CD8-positive, alpha-beta T cell (primary cell): ENCODE measurements at regions of chr20 and their contacts with region 1.

Region 1: DNA sequence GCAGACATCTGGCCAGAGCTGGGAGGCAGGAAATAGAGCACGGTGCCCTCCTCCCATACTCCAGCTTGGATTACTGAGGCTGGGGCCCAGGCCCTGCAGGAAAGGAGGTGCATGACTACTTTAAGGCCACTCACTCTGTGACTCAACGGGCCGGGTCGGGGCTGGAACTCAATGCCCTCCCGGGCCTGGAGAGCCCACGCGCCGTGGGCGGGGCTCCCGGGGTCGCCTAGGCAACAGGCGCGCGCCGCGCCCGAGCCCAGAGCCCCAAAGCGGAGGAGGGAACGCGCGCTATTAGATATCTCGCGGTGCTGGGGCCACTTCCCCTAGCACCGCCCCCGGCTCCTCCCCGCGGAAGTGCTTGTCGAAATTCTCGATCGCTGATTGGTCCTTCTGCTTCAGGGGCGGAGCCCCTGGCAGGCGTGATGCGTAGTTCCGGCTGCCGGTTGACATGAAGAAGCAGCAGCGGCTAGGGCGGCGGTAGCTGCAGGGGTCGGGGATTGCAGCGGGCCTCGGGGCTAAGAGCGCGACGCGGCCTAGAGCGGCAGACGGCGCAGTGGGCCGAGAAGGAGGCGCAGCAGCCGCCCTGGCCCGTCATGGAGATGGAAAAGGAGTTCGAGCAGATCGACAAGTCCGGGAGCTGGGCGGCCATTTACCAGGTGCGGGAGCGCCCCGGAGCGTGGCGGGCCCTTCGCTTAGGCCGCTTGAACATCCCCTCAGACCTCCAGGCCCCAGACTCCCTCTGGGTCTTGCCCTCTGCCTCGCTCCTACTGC is at the start of gene PTPN1:
- DNase-seq: peak; percentile 97 to 99 (median 99)
- ATAC-seq: peak; percentile 95
- H3K4me3 ChIP-seq: peak within 1 kb of the TSS; percentile 80 to 100
- H3K4me3 Mint-ChIP-seq: peak within 1 kb of the TSS; percentile 95
- H3K27ac ChIP-seq: peak within 1 kb of the TSS; percentile 91 to 94
- H3K27ac Mint-ChIP-seq: peak within 1 kb of the TSS; percentile 99
- H3K4me1 ChIP-seq: peaks cover 45% of the 10 kb centered on the region
- H3K4me1 Mint-ChIP-seq: peaks cover 52% of the 10 kb centered on the region
- H3K27me3 ChIP-seq: no peaks in the 10 kb centered on the region
- H3K27me3 Mint-ChIP-seq: no peaks in the 10 kb centered on the region
- CTCF ChIP-seq: no peak
- total RNA-seq, gene PTPN1: 96.0 to 97.5 TPM

Region 2: GRCh38 chr20:49812463-49813304 is 697.4 kb before region 1 on chr20 and contains the start of gene SLC9A8:
- CTCF ChIA-PET with region 1: no interaction called
- POLR2A ChIA-PET with region 1: no interaction called
- intact Hi-C with region 1: loop called in 1 of 2 experiments (anchors 10 kb)
- DNase-seq: peak; percentile 63 to 96 (median 82)
- ATAC-seq: peak; percentile 88
- H3K4me3 ChIP-seq: peak within 1 kb of the TSS; percentile 79 to 90
- H3K4me3 Mint-ChIP-seq: peak within 1 kb of the TSS; percentile 95
- H3K27ac ChIP-seq: peak within 1 kb of the TSS; percentile 84 to 95
- H3K27ac Mint-ChIP-seq: peak within 1 kb of the TSS; percentile 99
- H3K4me1 ChIP-seq: peaks cover 20% of the 10 kb centered on the region
- H3K4me1 Mint-ChIP-seq: peaks cover 35% of the 10 kb centered on the region
- H3K27me3 ChIP-seq: no peaks in the 10 kb centered on the region
- H3K27me3 Mint-ChIP-seq: no peaks in the 10 kb centered on the region
- CTCF ChIP-seq: peak; percentile 14
- total RNA-seq, gene SLC9A8: 30.7 to 32.9 TPM

Region 3: GRCh38 chr20:49853640-49854039 is 656.5 kb before region 1 on chr20:
- CTCF ChIA-PET with region 1: no interaction called
- POLR2A ChIA-PET with region 1: no interaction called
- intact Hi-C with region 1: no loop called
- DNase-seq: no peak
- ATAC-seq: no peak
- H3K4me3 ChIP-seq: no peak overlapping the region
- H3K4me3 Mint-ChIP-seq: no peak overlapping the region
- H3K27ac ChIP-seq: no peak overlapping the region
- H3K27ac Mint-ChIP-seq: no peak overlapping the region
- H3K4me1 ChIP-seq: no peaks in the 10 kb centered on the region
- H3K4me1 Mint-ChIP-seq: peaks cover 5% of the 10 kb centered on the region
- H3K27me3 ChIP-seq: no peaks in the 10 kb centered on the region
- H3K27me3 Mint-ChIP-seq: no peaks in the 10 kb centered on the region
- CTCF ChIP-seq: no peak

Region 4: GRCh38 chr20:50153485-50154377 is 356.4 kb before region 1 on chr20 and contains the start of gene PEDS1:
- CTCF ChIA-PET with region 1: interaction called, 3 read pairs
- POLR2A ChIA-PET with region 1: no interaction called
- intact Hi-C with region 1: loop called in 1 of 2 experiments (anchors 1 kb)
- DNase-seq: peak; percentile 55 to 92 (median 80)
- ATAC-seq: peak; percentile 93
- H3K4me3 ChIP-seq: peak within 1 kb of the TSS; percentile 89 to 92
- H3K4me3 Mint-ChIP-seq: peak within 1 kb of the TSS; percentile 90
- H3K27ac ChIP-seq: peak within 1 kb of the TSS; percentile 77 to 78
- H3K27ac Mint-ChIP-seq: peak within 1 kb of the TSS; percentile 91
- H3K4me1 ChIP-seq: peaks cover 36% of the 10 kb centered on the region
- H3K4me1 Mint-ChIP-seq: peaks cover 43% of the 10 kb centered on the region
- H3K27me3 ChIP-seq: no peaks in the 10 kb centered on the region
- H3K27me3 Mint-ChIP-seq: no peaks in the 10 kb centered on the region
- CTCF ChIP-seq: no peak
- total RNA-seq, gene PEDS1: 19.0 to 20.8 TPM

Region 5: GRCh38 chr20:50484276-50484976 is 25.7 kb before region 1 on chr20:
- CTCF ChIA-PET with region 1: interaction called, 3 read pairs
- POLR2A ChIA-PET with region 1: interaction called, 10 read pairs
- intact Hi-C with region 1: no loop called
- DNase-seq: no peak
- ATAC-seq: no peak
- H3K4me3 ChIP-seq: peak overlapping the region; percentile 36 to 64
- H3K4me3 Mint-ChIP-seq: peak overlapping the region; percentile 92
- H3K27ac ChIP-seq: peak overlapping the region; percentile 63 to 93
- H3K27ac Mint-ChIP-seq: peak overlapping the region; percentile 95
- H3K4me1 ChIP-seq: peaks cover 14% of the 10 kb centered on the region
- H3K4me1 Mint-ChIP-seq: peaks cover 23% of the 10 kb centered on the region
- H3K27me3 ChIP-seq: no peaks in the 10 kb centered on the region
- H3K27me3 Mint-ChIP-seq: no peaks in the 10 kb centered on the region
- CTCF ChIP-seq: no peak

Region 6: GRCh38 chr20:50575847-50576720 is 66.0 kb after region 1 on chr20:
- CTCF ChIA-PET with region 1: interaction called, 42 read pairs
- POLR2A ChIA-PET with region 1: interaction called, 4 read pairs
- intact Hi-C with region 1: loop called in 1 of 2 experiments (anchors 2 kb)
- DNase-seq: peak; percentile 38 to 77 (median 61)
- ATAC-seq: peak; percentile 76
- H3K4me3 ChIP-seq: no peak overlapping the region
- H3K4me3 Mint-ChIP-seq: no peak overlapping the region
- H3K27ac ChIP-seq: no peak overlapping the region
- H3K27ac Mint-ChIP-seq: peak overlapping the region; percentile 78
- H3K4me1 ChIP-seq: peaks cover 3% of the 10 kb centered on the region
- H3K4me1 Mint-ChIP-seq: peaks cover 22% of the 10 kb centered on the region
- H3K27me3 ChIP-seq: no peaks in the 10 kb centered on the region
- H3K27me3 Mint-ChIP-seq: no peaks in the 10 kb centered on the region
- CTCF ChIP-seq: no peak

Region 7: GRCh38 chr20:50645253-50646118 is 135.4 kb after region 1 on chr20:
- CTCF ChIA-PET with region 1: no interaction called
- POLR2A ChIA-PET with region 1: no interaction called
- intact Hi-C with region 1: no loop called
- DNase-seq: no peak
- ATAC-seq: no peak
- H3K4me3 ChIP-seq: no peak overlapping the region
- H3K4me3 Mint-ChIP-seq: no peak overlapping the region
- H3K27ac ChIP-seq: no peak overlapping the region
- H3K27ac Mint-ChIP-seq: no peak overlapping the region
- H3K4me1 ChIP-seq: no peaks in the 10 kb centered on the region
- H3K4me1 Mint-ChIP-seq: no peaks in the 10 kb centered on the region
- H3K27me3 ChIP-seq: no peaks in the 10 kb centered on the region
- H3K27me3 Mint-ChIP-seq: no peaks in the 10 kb centered on the region
- CTCF ChIP-seq: no peak